CD14-positive monocyte (primary cell): ENCODE measurements at regions of chr12 and their contacts with region 1.

Region 1: DNA sequence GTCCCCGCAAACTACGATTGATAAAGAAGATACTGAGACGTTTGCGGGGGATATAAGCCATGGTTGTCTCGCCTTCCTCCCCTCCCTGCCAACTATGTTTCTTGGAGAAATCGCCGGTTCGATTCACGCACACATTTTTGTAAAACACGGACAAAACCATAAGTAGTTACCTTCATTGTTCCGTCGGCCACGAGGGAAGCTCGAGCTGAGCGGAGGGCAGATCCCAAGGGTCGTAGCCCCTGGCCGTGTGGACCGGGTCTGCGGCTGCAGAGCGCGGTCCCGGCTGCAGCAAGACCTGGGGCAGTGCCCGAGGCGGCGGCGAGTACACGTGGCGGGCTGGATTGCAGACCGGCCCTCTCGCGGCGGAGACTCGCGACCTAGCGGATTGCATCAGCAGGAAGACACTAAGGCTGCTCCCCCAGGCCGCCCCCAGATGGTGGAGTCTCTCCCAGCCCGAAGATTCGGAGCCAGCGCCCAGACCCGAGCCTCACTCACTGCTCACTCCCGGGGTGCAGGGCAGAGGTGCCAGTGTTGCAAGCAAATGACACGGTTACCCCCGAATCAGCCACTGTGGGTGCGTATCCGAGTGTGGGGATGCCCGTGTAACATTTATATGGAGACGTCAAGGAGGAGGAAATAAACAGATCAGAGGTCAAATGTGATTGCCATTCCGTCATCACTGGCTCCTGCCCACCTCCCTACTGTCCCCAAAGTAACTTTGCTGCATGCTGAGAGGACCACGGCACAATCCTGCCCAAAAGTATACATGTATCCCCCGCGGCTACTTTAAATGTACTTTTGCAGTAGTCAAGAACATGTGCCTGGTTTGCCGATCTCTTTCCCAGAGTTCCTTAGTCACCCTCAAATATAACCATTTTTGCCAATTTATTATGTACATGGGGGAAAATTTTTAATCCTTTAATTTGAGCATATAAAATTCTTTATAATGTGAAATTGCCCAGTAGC is at the start of gene BCAT1:
- DNase-seq: peak; percentile 60 to 74 (median 66)
- H3K4me3 ChIP-seq: peak within 1 kb of the TSS; percentile 54 to 82 (median 71)
- H3K4me3 Mint-ChIP-seq: peak within 1 kb of the TSS; percentile 97 to 99
- H3K27ac ChIP-seq: peak within 1 kb of the TSS in 1 of 2 donors; percentile 60
- H3K27ac Mint-ChIP-seq: peak within 1 kb of the TSS; percentile 54 to 81 (median 74)
- H3K4me1 ChIP-seq: peaks cover 44 to 60% of the 10 kb centered on the region in 2 donors
- H3K4me1 Mint-ChIP-seq: peaks cover 58% of the 10 kb centered on the region
- H3K27me3 ChIP-seq: no peaks in the 10 kb centered on the region
- H3K27me3 Mint-ChIP-seq: peaks cover 7 to 12% (median 11%) of the 10 kb centered on the region in 3 donors
- CTCF ChIP-seq: no peak
- polyA plus RNA-seq, gene BCAT1: 3.5 to 16.9 (median 15.2) TPM

Region 2: DNA sequence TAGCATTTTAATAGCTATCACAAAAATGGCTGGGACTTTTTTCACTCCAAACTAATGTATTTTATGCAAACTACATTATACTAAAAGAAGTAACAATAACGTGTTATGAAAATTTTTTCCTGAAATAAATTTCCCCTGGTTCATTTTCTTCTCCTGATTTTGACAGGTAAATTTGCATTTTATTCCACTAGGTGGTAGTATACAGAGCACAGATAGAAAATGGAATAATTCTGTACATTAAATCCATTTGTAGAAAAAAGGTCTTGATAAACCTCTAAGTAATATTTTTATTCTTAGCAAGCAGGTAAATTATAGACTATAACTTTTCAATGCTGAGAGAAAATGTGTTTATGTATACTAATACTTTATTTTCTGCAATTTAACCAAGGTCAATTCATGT is 96.6 kb before region 1 on chr12:
- intact Hi-C with region 1: loop called in 1 of 2 experiments (anchors 5 kb)
- DNase-seq: no peak
- H3K4me3 ChIP-seq: no peak overlapping the region
- H3K4me3 Mint-ChIP-seq: no peak overlapping the region
- H3K27ac ChIP-seq: no peak overlapping the region
- H3K27ac Mint-ChIP-seq: no peak overlapping the region
- H3K4me1 ChIP-seq: peaks cover 0 to 4% of the 10 kb centered on the region in 2 donors
- H3K4me1 Mint-ChIP-seq: peaks cover 18% of the 10 kb centered on the region
- H3K27me3 ChIP-seq: no peaks in the 10 kb centered on the region
- H3K27me3 Mint-ChIP-seq: no peaks in the 10 kb centered on the region
- CTCF ChIP-seq: peak; percentile 46

Region 3: GRCh38 chr12:24902511-24903328 is 46.3 kb before region 1 on chr12:
- intact Hi-C with region 1: loop called (anchors 5 kb)
- DNase-seq: peak; percentile 44 to 49 (median 48)
- H3K4me3 ChIP-seq: peak overlapping the region; percentile 45 to 82 (median 70)
- H3K4me3 Mint-ChIP-seq: no peak overlapping the region
- H3K27ac ChIP-seq: peak overlapping the region in 1 of 2 donors; percentile 85
- H3K27ac Mint-ChIP-seq: peak overlapping the region in 6 of 7 donors; percentile 36 to 96 (median 90)
- H3K4me1 ChIP-seq: peaks cover 49 to 65% of the 10 kb centered on the region in 2 donors
- H3K4me1 Mint-ChIP-seq: peaks cover 53% of the 10 kb centered on the region
- H3K27me3 ChIP-seq: peaks cover 0 to 5% of the 10 kb centered on the region in 2 donors
- H3K27me3 Mint-ChIP-seq: peaks cover 3 to 17% (median 8%) of the 10 kb centered on the region in 3 donors
- CTCF ChIP-seq: no peak

Region 4: GRCh38 chr12:24913130-24913529 is 35.9 kb before region 1 on chr12:
- intact Hi-C with region 1: no loop called
- DNase-seq: no peak
- H3K4me3 ChIP-seq: no peak overlapping the region
- H3K4me3 Mint-ChIP-seq: no peak overlapping the region
- H3K27ac ChIP-seq: no peak overlapping the region
- H3K27ac Mint-ChIP-seq: no peak overlapping the region
- H3K4me1 ChIP-seq: peaks cover 12 to 17% of the 10 kb centered on the region in 2 donors
- H3K4me1 Mint-ChIP-seq: peaks cover 17% of the 10 kb centered on the region
- H3K27me3 ChIP-seq: no peaks in the 10 kb centered on the region
- H3K27me3 Mint-ChIP-seq: peaks cover 0 to 3% (median 0%) of the 10 kb centered on the region in 3 donors
- CTCF ChIP-seq: no peak